ENCODE measurements at regions of chr4 and their contacts with region 1.

Region 1: GRCh38 chr4:113539408-113539807 is 222.1 kb downstream of the CAMK2D start:
- DNase-seq: no peak
- H3K4me3 Mint-ChIP-seq: peak overlapping the region; percentile 9
- H3K27ac Mint-ChIP-seq: peak overlapping the region; percentile 79
- H3K4me1 Mint-ChIP-seq: peaks cover 30% of the 10 kb centered on the region
- H3K27me3 Mint-ChIP-seq: no peaks in the 10 kb centered on the region

Region 2: GRCh38 chr4:113445286-113445685 is 94.1 kb before region 1 on chr4:
- intact Hi-C with region 1: loop called (anchors 1 kb)
- DNase-seq: no peak
- H3K4me3 Mint-ChIP-seq: no peak overlapping the region
- H3K27ac Mint-ChIP-seq: peak overlapping the region; percentile 66
- H3K4me1 Mint-ChIP-seq: peaks cover 28% of the 10 kb centered on the region
- H3K27me3 Mint-ChIP-seq: peaks cover 1% of the 10 kb centered on the region

Region 3: DNA sequence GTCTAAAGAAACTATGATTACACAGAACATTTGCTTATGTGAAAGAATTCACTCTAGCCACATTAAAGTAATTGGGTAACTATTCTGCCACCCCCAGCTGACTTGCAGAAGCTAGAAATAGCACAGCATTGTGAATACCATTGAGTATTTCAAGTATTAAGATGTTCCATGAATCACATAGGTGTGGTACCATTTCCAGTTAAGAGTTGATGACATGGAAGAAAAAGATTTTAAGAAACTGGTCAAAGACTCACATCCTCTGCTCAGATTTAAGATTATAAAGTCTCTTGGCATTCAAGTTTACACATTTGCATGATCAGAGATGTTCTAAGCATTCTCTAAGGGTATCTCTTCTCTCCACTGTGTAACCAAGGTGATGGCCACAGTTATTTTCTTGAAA is 65.4 kb before region 1 on chr4:
- intact Hi-C with region 1: loop called (anchors 1 kb)
- DNase-seq: no peak
- H3K4me3 Mint-ChIP-seq: no peak overlapping the region
- H3K27ac Mint-ChIP-seq: peak overlapping the region; percentile 79
- H3K4me1 Mint-ChIP-seq: peaks cover 27% of the 10 kb centered on the region
- H3K27me3 Mint-ChIP-seq: no peaks in the 10 kb centered on the region

Region 4: GRCh38 chr4:113524096-113524495 is 15.3 kb before region 1 on chr4:
- intact Hi-C with region 1: loop called (anchors 1 kb)
- DNase-seq: no peak
- H3K4me3 Mint-ChIP-seq: no peak overlapping the region
- H3K27ac Mint-ChIP-seq: peak overlapping the region; percentile 48
- H3K4me1 Mint-ChIP-seq: peaks cover 12% of the 10 kb centered on the region
- H3K27me3 Mint-ChIP-seq: no peaks in the 10 kb centered on the region

Region 5: DNA sequence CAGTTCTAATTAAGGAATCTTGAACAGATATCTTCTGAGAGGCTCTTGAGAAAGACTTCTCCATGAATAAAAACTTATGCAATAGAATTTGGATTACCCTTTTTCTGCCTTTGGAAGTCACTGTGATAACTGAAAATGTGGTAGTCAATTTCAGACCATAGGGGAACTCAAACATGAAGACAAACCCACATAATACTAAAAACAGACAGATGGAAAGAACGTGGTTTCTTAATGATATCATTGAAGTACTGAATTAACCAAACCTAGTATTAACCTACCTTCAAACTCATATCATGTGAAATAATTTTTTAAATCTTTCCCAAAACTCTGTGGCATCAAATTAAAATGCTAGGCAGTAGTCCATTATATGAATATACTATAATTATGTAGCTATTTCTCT is 68.6 kb after region 1 on chr4:
- intact Hi-C with region 1: loop called (anchors 1 kb)
- DNase-seq: no peak
- H3K4me3 Mint-ChIP-seq: no peak overlapping the region
- H3K27ac Mint-ChIP-seq: peak overlapping the region; percentile 35
- H3K4me1 Mint-ChIP-seq: peaks cover 18% of the 10 kb centered on the region
- H3K27me3 Mint-ChIP-seq: no peaks in the 10 kb centered on the region

Region 6: DNA sequence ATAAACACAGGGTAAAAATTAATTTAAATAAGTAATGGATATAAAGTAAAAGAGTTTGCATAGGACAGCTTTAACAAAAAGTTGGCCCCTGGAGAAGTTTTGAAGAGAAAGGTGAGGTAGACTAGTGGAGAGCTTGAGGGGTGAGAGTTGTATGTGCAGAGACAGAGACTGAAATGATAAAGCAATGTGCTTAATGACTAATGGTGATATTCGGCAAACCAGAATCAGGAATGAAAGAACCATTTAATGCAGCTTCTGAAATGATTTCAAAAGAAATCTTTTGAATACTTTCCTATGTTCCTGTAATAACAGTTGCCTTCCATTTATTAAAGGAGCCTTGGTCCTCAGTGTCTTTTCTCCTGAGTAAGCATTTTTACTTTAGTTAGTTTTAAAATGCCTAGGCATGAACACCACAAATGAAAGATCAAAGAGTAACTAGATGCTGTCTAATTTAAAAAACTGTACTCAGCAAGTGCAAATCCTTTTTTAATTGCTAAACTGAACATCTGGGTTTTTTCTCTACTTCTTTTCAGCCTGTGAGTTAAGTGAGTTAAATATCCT is 193.6 kb after region 1 on chr4:
- intact Hi-C with region 1: loop called (anchors 1 kb)
- DNase-seq: no peak
- H3K4me3 Mint-ChIP-seq: no peak overlapping the region
- H3K27ac Mint-ChIP-seq: peak overlapping the region; percentile 50
- H3K4me1 Mint-ChIP-seq: peaks cover 48% of the 10 kb centered on the region
- H3K27me3 Mint-ChIP-seq: no peaks in the 10 kb centered on the region

Measured in activated CD4-positive, alpha-beta T cell treated with anti-CD3 and anti-CD28 coated beads, Interleukin-2, amount 10 ng/mL, durations not matched to agents 24 days and 14 days (primary cell).